ENCODE measurements at regions of chr15 and their contacts with region 1.

Region 1: DNA sequence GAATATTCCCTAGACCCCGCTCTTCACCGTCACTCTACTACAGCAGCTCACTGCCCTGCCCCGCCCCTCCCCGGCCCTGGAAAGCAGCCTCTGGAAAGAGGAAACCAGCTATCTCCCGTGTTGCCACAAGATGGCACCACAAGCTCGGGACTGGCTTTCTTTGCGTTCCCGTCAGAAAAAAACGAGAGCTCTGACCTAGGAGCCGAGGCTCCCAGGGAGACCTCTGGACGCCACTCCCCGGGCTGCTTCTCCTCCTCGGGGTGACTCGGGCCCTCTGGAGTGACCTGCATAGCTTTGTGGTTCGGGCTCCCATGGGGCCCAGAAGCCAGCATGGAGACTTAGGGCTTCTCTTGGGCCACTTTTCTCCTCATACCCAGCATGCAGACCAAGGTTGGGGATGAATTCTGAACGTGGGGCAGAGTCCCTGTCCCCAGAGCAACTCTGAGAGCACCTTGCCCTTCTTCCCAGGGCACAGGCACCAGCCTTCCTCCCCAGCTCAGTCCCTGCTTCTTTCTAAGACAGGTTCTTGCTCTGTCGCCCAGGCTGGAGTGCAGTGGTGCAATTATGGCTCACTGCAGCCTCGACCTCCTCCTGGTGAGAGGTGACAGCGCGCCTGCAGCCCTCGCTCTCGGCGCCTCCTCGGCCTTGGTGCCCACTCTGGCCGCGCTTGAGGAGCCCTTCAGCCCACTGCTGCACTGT is 19.0 kb downstream of the STOML1 start:
- DNase-seq: peak; percentile 66
- ATAC-seq: peak; percentile 93
- H3K4me3 Mint-ChIP-seq: no peak overlapping the region
- H3K27ac Mint-ChIP-seq: no peak overlapping the region
- H3K4me1 Mint-ChIP-seq: peaks cover 18% of the 10 kb centered on the region
- H3K27me3 Mint-ChIP-seq: peaks cover 25% of the 10 kb centered on the region
- CTCF ChIP-seq: peak; percentile 20

Region 2: GRCh38 chr15:73991726-73992593 is 18.8 kb after region 1 on chr15 and contains the start of gene STOML1:
- CTCF ChIA-PET with region 1: interaction called, 17 read pairs
- POLR2A ChIA-PET with region 1: interaction called, 4 read pairs
- intact Hi-C with region 1: no loop called
- DNase-seq: peak; percentile 98
- ATAC-seq: peak; percentile 77
- H3K4me3 Mint-ChIP-seq: peak within 1 kb of the TSS; percentile 86
- H3K27ac Mint-ChIP-seq: peak within 1 kb of the TSS; percentile 69
- H3K4me1 Mint-ChIP-seq: peaks cover 66% of the 10 kb centered on the region
- H3K27me3 Mint-ChIP-seq: no peaks in the 10 kb centered on the region
- CTCF ChIP-seq: no peak
- total RNA-seq, gene STOML1: 8.9 and 10.6 TPM in 2 replicates

Region 3: DNA sequence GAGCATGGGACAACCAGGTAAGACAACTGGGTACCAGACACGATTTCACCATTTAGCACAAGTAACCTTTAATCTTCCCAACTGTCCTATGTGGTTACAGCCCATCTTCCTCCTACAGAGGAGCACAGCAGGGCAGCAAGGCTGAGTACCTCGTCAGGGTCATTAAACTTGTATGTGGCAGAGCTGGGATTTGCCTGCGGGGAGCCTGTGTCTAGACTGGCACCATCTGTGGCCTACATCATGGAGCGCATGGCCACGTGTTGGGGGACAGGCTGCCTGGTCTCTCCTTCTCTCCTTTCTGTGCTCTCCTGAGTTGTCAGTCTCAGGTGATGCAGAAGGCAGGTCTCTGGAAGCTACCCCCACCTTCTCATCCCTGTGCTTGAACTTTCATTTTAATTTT is 77.0 kb after region 1 on chr15:
- CTCF ChIA-PET with region 1: interaction called, 26 read pairs
- POLR2A ChIA-PET with region 1: interaction called, 5 read pairs
- intact Hi-C with region 1: no loop called
- DNase-seq: no peak
- ATAC-seq: no peak
- H3K4me3 Mint-ChIP-seq: no peak overlapping the region
- H3K27ac Mint-ChIP-seq: no peak overlapping the region
- H3K4me1 Mint-ChIP-seq: peaks cover 20% of the 10 kb centered on the region
- H3K27me3 Mint-ChIP-seq: no peaks in the 10 kb centered on the region
- CTCF ChIP-seq: no peak

Region 4: GRCh38 chr15:74134387-74135027 is 161.4 kb after region 1 on chr15:
- CTCF ChIA-PET with region 1: interaction called, 5 read pairs
- POLR2A ChIA-PET with region 1: no interaction called
- intact Hi-C with region 1: loop called (anchors 2 kb)
- DNase-seq: peak; percentile 41
- ATAC-seq: no peak
- H3K4me3 Mint-ChIP-seq: peak overlapping the region; percentile 64
- H3K27ac Mint-ChIP-seq: peak overlapping the region; percentile 50
- H3K4me1 Mint-ChIP-seq: peaks cover 49% of the 10 kb centered on the region
- H3K27me3 Mint-ChIP-seq: peaks cover 75% of the 10 kb centered on the region
- CTCF ChIP-seq: no peak

Region 5: DNA sequence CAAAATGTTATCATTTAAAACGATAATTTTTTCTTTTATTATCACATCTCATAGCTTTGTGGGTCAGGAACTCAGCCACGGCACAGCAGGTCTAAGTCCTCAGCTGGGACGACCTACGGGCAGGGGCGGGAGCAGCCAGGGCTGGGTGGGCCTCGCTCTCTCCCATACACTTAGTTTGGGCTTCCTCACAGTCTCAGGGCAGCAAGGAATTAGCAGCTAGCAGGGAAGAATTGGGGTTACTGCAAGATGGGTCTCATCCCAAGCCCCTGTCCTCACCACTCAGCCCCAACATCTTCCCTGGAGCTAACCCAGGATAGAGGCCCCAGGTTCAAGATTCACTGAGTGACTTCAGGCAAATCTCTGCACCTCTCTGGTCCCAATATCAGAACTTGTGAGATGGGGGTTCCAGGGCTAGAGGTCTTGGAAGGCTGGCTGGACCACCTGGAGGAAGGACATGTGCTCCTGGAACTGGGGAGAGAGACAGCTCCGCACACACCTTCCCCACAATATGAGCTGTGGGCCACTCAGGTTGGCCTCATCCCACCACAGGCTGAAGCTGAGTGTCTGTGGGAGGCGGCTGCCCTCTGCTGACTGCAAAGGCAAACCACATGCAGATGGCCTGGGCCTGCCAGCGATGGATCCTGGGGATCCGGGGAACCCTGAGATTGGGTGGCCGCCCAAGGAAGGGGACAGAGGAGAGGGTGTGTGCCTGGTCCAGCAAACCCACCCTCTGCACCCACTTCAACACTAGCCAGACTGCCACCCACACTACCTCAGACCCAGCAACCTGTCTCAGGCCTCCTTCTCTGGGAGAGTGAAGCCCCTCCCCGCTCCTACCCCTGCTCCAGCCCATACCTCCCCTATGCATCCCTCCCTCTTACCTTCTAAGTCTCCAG is 349.3 kb after region 1 on chr15:
- CTCF ChIA-PET with region 1: interaction called, 16 read pairs
- POLR2A ChIA-PET with region 1: no interaction called
- intact Hi-C with region 1: loop called (anchors 1 kb)
- DNase-seq: peak; percentile 38
- ATAC-seq: peak; percentile 81
- H3K4me3 Mint-ChIP-seq: no peak overlapping the region
- H3K27ac Mint-ChIP-seq: no peak overlapping the region
- H3K4me1 Mint-ChIP-seq: peaks cover 2% of the 10 kb centered on the region
- H3K27me3 Mint-ChIP-seq: peaks cover 10% of the 10 kb centered on the region
- CTCF ChIP-seq: no peak

Measured in activated B cell treated with CpG ODN at 0.5 μM for 24 hours (primary cell).